ENCODE measurements at regions of chr7 and their contacts with region 1.

Region 1: DNA sequence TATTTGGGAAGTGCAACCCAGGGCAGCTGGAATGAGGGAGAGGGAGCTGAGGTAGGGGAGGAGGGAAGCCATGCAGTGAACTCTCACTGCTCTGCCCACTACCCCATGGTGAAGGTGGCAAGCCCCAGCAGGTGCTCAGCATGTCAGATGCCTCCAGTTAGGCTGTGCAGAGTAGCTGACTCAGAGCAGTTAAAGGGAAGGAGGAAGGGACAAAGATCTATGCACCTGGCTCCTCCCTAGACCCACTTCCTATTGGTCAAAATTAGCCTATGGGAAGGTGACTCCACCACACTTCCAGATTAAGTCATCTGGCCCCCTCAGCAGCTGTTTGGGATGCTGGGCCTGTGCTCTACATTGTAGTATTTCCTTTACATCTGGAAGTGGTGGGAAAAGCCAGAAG is 125.7 kb upstream of the MTPN start:
- DNase-seq: no peak
- H3K4me3 ChIP-seq: no peak overlapping the region
- H3K27ac ChIP-seq: no peak overlapping the region
- H3K4me1 ChIP-seq: no peaks in the 10 kb centered on the region
- H3K27me3 ChIP-seq: no peaks in the 10 kb centered on the region
- CTCF ChIP-seq: no peak
- EP300 ChIP-seq: no peak
- POLR2A ChIP-seq: no peak

Region 2: GRCh38 chr7:136114966-136115762 is 12.3 kb after region 1 on chr7:
- intact Hi-C with region 1: loop called (anchors 1 kb)
- DNase-seq: no peak
- H3K4me3 ChIP-seq: no peak overlapping the region
- H3K27ac ChIP-seq: no peak overlapping the region
- H3K4me1 ChIP-seq: no peaks in the 10 kb centered on the region
- H3K27me3 ChIP-seq: no peaks in the 10 kb centered on the region
- CTCF ChIP-seq: peak; percentile 29 to 65 (median 47)
- EP300 ChIP-seq: no peak
- POLR2A ChIP-seq: no peak

Region 3: DNA sequence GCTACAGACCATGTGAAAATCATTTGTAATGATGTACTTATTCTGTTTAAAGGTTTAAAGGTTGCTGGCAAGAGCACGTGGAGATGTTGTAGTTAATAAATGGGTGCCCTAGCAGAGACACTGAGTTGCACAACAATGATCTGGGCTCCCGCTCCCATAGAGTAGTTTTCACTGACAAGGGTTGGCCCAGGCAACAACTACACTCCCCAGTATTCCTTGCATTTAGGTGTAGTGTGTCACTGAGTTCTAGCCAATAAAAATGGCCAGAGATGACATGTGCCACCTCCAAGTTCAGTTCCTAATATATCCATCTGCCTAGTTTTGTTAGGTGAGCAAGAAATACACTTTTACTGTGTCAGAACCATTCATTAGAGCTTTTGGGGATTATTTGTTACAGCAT is 266.3 kb after region 1 on chr7:
- intact Hi-C with region 1: no loop called
- DNase-seq: no peak
- H3K4me3 ChIP-seq: no peak overlapping the region
- H3K27ac ChIP-seq: no peak overlapping the region
- H3K4me1 ChIP-seq: no peaks in the 10 kb centered on the region
- H3K27me3 ChIP-seq: no peaks in the 10 kb centered on the region
- CTCF ChIP-seq: no peak
- EP300 ChIP-seq: no peak
- POLR2A ChIP-seq: no peak